CD8-positive, alpha-beta T cell (primary cell): ENCODE measurements at regions of chr21 and their contacts with region 1.

Region 1: GRCh38 chr21:28324690-28325089 is 668.0 kb downstream of the LTN1 start:
- DNase-seq: no peak
- ATAC-seq: no peak
- H3K4me3 ChIP-seq: no peak overlapping the region
- H3K4me3 Mint-ChIP-seq: no peak overlapping the region
- H3K27ac ChIP-seq: no peak overlapping the region
- H3K27ac Mint-ChIP-seq: no peak overlapping the region
- H3K4me1 ChIP-seq: no peaks in the 10 kb centered on the region
- H3K4me1 Mint-ChIP-seq: no peaks in the 10 kb centered on the region
- H3K27me3 ChIP-seq: no peaks in the 10 kb centered on the region
- H3K27me3 Mint-ChIP-seq: no peaks in the 10 kb centered on the region
- CTCF ChIP-seq: no peak

Region 2: DNA sequence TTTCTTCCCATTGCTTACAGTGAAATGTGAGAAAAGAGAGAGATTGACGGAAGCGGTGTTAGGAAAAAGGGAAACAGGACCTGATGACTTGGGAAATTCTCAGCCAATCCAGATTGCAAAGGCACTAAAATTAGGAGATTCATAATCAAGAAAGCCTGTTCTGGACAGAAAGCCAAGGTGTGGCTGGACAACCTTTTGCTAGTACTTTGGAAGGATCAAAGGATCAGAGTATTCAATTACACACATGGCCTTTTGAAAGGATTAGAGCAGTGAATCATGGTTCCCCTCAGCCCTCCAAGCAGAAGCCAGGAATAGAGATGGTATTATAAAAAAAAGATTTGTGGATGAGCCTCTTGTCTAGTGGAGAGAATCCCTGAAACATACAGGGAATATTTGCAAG is 688.0 kb before region 1 on chr21:
- CTCF ChIA-PET with region 1: no interaction called
- POLR2A ChIA-PET with region 1: no interaction called
- intact Hi-C with region 1: loop called in 1 of 2 experiments (anchors 5 kb)
- DNase-seq: no peak
- ATAC-seq: no peak
- H3K4me3 ChIP-seq: no peak overlapping the region
- H3K4me3 Mint-ChIP-seq: no peak overlapping the region
- H3K27ac ChIP-seq: no peak overlapping the region
- H3K27ac Mint-ChIP-seq: no peak overlapping the region
- H3K4me1 ChIP-seq: no peaks in the 10 kb centered on the region
- H3K4me1 Mint-ChIP-seq: no peaks in the 10 kb centered on the region
- H3K27me3 ChIP-seq: no peaks in the 10 kb centered on the region
- H3K27me3 Mint-ChIP-seq: no peaks in the 10 kb centered on the region
- CTCF ChIP-seq: no peak

Region 3: DNA sequence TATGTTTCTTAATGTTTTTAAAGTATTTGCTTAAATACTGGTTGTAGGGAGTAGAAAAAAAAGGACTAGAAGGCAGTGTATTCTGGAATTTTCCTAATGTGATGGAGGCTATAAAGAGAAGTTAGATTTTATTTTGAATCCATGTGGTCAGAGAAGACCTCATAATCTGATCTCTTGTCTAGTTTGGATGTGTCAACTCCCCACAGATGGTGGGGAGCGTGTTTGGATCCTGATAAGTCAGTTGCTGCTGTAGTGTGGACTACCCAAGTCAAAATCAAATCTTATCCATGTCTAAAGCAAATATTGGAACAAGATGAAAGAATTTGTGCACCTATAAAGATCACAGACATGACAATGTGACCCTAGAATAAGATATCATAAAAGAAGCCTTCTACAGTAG is 250.0 kb before region 1 on chr21:
- CTCF ChIA-PET with region 1: no interaction called
- POLR2A ChIA-PET with region 1: no interaction called
- intact Hi-C with region 1: no loop called
- DNase-seq: no peak
- ATAC-seq: no peak
- H3K4me3 ChIP-seq: no peak overlapping the region
- H3K4me3 Mint-ChIP-seq: no peak overlapping the region
- H3K27ac ChIP-seq: no peak overlapping the region
- H3K27ac Mint-ChIP-seq: no peak overlapping the region
- H3K4me1 ChIP-seq: no peaks in the 10 kb centered on the region
- H3K4me1 Mint-ChIP-seq: no peaks in the 10 kb centered on the region
- H3K27me3 ChIP-seq: no peaks in the 10 kb centered on the region
- H3K27me3 Mint-ChIP-seq: no peaks in the 10 kb centered on the region
- CTCF ChIP-seq: no peak

Region 4: GRCh38 chr21:28177124-28177523 is 147.6 kb before region 1 on chr21:
- CTCF ChIA-PET with region 1: no interaction called
- POLR2A ChIA-PET with region 1: no interaction called
- intact Hi-C with region 1: no loop called
- DNase-seq: no peak
- ATAC-seq: no peak
- H3K4me3 ChIP-seq: no peak overlapping the region
- H3K4me3 Mint-ChIP-seq: no peak overlapping the region
- H3K27ac ChIP-seq: no peak overlapping the region
- H3K27ac Mint-ChIP-seq: no peak overlapping the region
- H3K4me1 ChIP-seq: no peaks in the 10 kb centered on the region
- H3K4me1 Mint-ChIP-seq: no peaks in the 10 kb centered on the region
- H3K27me3 ChIP-seq: no peaks in the 10 kb centered on the region
- H3K27me3 Mint-ChIP-seq: no peaks in the 10 kb centered on the region
- CTCF ChIP-seq: no peak

Region 5: DNA sequence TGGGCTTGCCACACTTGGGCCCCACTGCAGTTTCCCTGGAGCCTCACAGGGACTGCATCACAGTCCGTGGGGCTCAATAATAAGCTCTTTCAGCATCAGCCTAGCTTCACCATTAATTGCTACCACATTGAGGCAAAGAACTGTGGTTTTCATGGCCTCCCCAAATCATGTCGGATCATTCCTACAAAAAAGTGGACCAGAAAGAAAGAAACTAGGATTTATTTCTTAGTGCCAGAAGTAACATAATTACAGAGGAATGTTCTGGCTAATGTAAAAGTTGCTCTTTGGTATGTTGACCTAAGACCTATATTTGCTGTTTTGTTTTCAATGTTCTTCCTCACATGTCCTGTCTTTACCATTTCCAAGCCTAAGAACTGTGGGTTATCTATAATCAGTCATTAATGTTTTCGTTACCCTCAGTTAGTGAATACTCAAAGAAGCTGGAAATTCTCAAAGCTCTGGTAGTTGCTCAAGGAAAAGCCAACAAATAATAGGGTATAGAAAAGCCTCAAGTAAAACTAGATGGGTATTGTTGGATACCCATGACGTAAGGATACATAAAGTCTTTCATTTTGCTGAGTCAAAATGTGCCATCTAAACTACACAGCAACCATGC is 494.1 kb after region 1 on chr21:
- CTCF ChIA-PET with region 1: no interaction called
- POLR2A ChIA-PET with region 1: no interaction called
- intact Hi-C with region 1: no loop called
- DNase-seq: no peak
- ATAC-seq: no peak
- H3K4me3 ChIP-seq: no peak overlapping the region
- H3K4me3 Mint-ChIP-seq: no peak overlapping the region
- H3K27ac ChIP-seq: no peak overlapping the region
- H3K27ac Mint-ChIP-seq: no peak overlapping the region
- H3K4me1 ChIP-seq: no peaks in the 10 kb centered on the region
- H3K4me1 Mint-ChIP-seq: peaks cover 5% of the 10 kb centered on the region
- H3K27me3 ChIP-seq: no peaks in the 10 kb centered on the region
- H3K27me3 Mint-ChIP-seq: no peaks in the 10 kb centered on the region
- CTCF ChIP-seq: no peak